ENCODE measurements at regions of chr3 and their contacts with region 1.

Region 1: GRCh38 chr3:98608029-98608674 is 14.7 kb upstream of the CPOX start:
- DNase-seq: no peak
- H3K4me3 ChIP-seq: no peak overlapping the region
- H3K27ac ChIP-seq: no peak overlapping the region
- H3K4me1 ChIP-seq: no peaks in the 10 kb centered on the region
- H3K27me3 ChIP-seq: no peaks in the 10 kb centered on the region
- CTCF ChIP-seq: no peak

Region 2: DNA sequence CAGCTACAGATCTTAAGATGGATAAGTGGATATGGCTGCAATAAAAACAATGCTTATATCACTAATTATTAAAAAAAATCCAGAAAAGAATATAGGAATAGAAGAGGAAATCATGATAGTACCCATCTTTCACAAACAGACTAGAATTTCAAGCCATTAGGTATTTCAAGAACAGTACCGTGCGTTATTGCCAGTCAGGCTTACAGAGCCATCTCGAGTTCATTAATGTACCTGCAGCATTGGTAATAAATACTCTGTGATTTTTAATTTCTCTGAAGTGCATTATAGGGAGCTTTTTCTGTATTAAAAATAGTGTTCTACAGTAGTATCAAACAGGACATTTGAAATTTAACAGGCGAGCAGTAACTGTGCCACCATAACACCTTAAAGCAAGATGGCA is 190.7 kb after region 1 on chr3:
- intact Hi-C with region 1: loop called (anchors 5 kb)
- DNase-seq: no peak
- H3K4me3 ChIP-seq: no peak overlapping the region
- H3K27ac ChIP-seq: no peak overlapping the region
- H3K4me1 ChIP-seq: no peaks in the 10 kb centered on the region
- H3K27me3 ChIP-seq: no peaks in the 10 kb centered on the region
- CTCF ChIP-seq: no peak